Activated T-helper 2 cell treated with anti-CD3 and anti-CD28 coated beads, Interferon-gamma antibody, Interleukin-2, Interleukin-4, amounts not matched to agents 10 μg/mL and 5 μg/mL and 100 μg/mL, durations not matched to agents 14 hours and 24 hours and 36 hours (primary cell): ENCODE measurements at regions of chr13 and their contacts with region 1.

Region 1: DNA sequence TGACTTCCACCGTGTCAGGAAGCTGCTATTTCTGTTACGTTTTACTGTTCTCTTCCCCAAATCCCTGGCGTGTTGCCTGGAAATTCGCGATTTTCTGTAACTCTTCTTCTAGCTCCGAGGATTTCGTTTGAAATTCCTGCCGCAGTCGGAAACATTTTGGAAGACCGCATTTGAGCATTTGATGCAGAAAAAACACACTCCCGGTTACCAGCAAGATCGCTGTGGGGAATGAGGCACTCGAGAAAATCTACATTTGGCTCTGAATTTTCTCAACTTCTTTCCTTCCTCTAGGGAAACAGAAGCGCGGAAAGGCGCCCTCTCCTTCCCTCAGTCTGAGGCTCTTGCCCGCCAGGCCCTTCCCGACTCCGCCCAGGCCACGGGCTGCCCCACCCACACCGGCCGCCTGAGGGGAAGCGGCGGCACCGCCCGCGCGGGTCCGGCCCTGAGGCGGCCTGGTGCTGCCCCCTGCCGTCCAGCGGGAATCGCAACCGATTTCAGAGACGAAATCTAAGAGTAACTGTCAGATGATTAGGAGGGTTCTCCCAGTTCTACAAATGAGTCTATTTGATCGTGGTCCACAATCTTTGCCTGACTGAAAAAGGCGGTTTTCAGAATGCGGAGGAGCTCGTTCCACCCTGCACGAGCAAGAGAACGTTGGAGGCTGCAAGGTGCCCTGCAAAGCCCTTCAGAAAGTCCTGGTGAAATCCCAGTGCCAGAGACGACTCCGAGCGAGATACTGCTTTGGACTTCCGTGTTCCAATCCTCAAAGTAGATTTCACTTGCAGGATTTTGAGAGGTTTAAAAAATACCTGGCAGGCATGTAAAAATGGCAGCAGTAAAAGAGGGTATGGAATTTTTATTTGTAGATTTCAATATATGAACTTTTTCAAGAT is 18.4 kb upstream of the TUBGCP3 start:
- DNase-seq: peak; percentile 80
- H3K4me3 Mint-ChIP-seq: peak overlapping the region; percentile 78
- H3K27ac Mint-ChIP-seq: no peak overlapping the region
- H3K4me1 Mint-ChIP-seq: peaks cover 10% of the 10 kb centered on the region
- H3K27me3 Mint-ChIP-seq: peaks cover 37% of the 10 kb centered on the region

Region 2: GRCh38 chr13:112042495-112042894 is 563.9 kb before region 1 on chr13:
- intact Hi-C with region 1: no loop called
- DNase-seq: no peak
- H3K4me3 Mint-ChIP-seq: no peak overlapping the region
- H3K27ac Mint-ChIP-seq: no peak overlapping the region
- H3K4me1 Mint-ChIP-seq: no peaks in the 10 kb centered on the region
- H3K27me3 Mint-ChIP-seq: no peaks in the 10 kb centered on the region

Region 3: DNA sequence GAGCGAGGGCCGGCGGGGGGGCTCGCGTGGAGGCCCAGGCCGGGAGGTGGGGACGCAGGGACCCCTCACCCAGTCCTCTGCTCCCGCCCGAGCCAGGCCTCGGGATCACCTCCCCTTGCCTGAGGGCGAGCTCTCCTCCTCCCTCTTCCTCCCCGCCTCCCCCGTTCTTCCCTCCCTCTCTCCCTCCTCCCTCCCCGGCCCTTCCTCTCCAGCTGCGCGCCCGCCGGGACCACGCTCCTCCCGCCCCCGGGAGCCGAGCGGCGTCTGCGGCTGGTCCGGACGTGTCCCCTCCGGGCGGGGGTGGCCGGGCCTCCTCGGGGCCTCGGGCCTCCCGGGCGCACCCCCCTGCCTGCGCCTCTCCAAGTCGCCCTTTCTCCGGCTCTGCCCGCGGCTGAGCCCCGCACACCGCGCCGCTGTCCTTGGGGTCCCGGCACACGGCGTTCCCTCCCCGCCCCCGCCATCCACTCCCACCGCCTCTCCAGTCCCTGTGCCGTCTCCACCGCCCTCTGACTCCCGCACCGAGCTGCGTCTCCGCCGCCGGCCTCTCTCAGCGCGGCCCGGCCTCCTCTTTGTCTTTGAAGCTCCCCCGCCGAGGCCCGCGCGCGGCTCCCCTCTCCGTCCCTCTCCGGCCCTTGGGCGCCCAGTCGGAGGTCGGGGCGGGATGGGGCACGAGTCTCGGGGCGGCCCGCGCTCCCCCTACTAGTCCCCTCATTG is 533.7 kb before region 1 on chr13:
- intact Hi-C with region 1: loop called (anchors 5 kb)
- DNase-seq: no peak
- H3K4me3 Mint-ChIP-seq: no peak overlapping the region
- H3K27ac Mint-ChIP-seq: no peak overlapping the region
- H3K4me1 Mint-ChIP-seq: no peaks in the 10 kb centered on the region
- H3K27me3 Mint-ChIP-seq: peaks cover 66% of the 10 kb centered on the region

Region 4: GRCh38 chr13:112486386-112487126 is 119.8 kb before region 1 on chr13:
- intact Hi-C with region 1: loop called (anchors 10 kb)
- DNase-seq: no peak
- H3K4me3 Mint-ChIP-seq: no peak overlapping the region
- H3K27ac Mint-ChIP-seq: no peak overlapping the region
- H3K4me1 Mint-ChIP-seq: peaks cover 4% of the 10 kb centered on the region
- H3K27me3 Mint-ChIP-seq: no peaks in the 10 kb centered on the region

Region 5: DNA sequence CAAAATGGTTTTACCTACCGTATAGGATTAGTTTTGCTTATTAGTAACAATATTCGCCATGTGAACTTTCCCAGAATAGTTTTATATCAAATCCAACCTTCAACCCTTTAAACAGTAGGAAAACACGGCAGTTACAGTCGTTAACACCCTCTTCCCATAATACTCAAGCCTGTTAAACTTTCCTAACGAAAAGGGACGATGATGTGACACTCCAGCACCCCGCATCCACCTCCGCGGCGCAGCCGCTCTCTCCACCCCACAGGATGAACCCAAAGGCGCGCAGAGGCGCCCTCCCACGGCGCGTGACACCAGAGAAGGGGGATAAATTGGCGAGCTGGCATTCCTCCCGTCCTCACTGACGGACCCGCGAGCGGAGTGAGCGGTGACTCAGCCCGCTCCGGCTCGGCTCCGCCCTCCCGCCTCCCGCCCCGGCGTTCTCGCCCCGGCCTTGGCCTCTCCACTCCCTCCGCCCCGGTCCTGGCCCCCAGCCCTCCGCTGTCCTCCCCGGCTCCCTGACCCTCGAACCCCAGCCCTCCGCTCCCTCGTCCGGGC is 19.1 kb before region 1 on chr13:
- intact Hi-C with region 1: loop called (anchors 2 kb)
- DNase-seq: peak; percentile 56
- H3K4me3 Mint-ChIP-seq: peak overlapping the region; percentile 98
- H3K27ac Mint-ChIP-seq: peak overlapping the region; percentile 93
- H3K4me1 Mint-ChIP-seq: peaks cover 28% of the 10 kb centered on the region
- H3K27me3 Mint-ChIP-seq: no peaks in the 10 kb centered on the region

Region 6: GRCh38 chr13:113421673-113422270 is 815.4 kb after region 1 on chr13:
- intact Hi-C with region 1: no loop called
- DNase-seq: no peak
- H3K4me3 Mint-ChIP-seq: no peak overlapping the region
- H3K27ac Mint-ChIP-seq: no peak overlapping the region
- H3K4me1 Mint-ChIP-seq: no peaks in the 10 kb centered on the region
- H3K27me3 Mint-ChIP-seq: no peaks in the 10 kb centered on the region